AG04450 (cell line): ENCODE measurements at regions of chr21 and their contacts with region 1.

Region 1: GRCh38 chr21:31180256-31181081 is 142.2 kb upstream of the KRTAP19-8 start:
- DNase-seq: no peak
- H3K4me3 ChIP-seq: no peak overlapping the region
- H3K27ac ChIP-seq: no peak overlapping the region
- H3K27me3 ChIP-seq: no peaks in the 10 kb centered on the region
- CTCF ChIP-seq: peak; percentile 72

Region 2: DNA sequence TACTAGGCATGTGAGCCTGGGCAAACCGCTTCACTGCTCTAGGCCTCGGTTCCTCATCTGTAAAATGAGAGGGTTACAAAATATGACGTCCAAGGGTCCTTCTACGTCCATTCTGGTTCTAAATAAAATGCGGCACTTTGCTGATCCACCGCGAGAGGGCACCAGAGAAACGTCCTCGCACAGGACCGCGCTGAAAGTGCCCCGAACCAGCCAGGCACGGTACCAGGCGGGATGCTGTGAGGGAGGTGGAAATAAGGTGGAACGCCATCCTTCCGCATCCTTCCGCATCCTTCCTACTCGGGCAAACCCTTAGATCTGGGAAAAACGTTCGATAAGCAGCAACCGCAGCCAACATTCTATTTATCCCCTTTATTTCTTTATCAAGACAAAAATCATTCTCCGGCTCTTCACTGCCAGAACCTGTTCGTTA is 81.9 kb before region 1 on chr21:
- CTCF ChIA-PET with region 1: interaction called, 154 read pairs
- POLR2A ChIA-PET with region 1: no interaction called
- DNase-seq: peak; percentile 10
- H3K4me3 ChIP-seq: no peak overlapping the region
- H3K27ac ChIP-seq: no peak overlapping the region
- H3K27me3 ChIP-seq: no peaks in the 10 kb centered on the region
- CTCF ChIP-seq: peak; percentile 91

Region 3: DNA sequence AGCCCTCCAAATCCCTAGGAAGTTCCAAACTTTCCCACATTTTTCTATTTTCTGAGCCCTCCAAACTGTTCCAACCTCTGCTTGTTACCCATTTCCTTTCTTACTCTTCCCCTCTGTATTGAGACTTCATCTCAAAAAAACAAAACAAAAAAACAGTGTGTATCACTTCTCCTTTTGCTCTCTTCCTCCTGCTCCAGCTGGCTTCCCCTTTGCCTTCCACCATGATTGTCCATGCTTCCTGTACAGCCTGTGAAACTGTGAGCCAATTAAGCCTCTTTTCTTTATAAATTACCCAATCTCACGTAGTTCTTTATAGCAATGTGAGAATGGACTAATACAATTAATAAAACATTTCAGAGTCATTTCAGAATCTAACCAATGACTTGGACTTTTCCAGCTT is 72.6 kb before region 1 on chr21:
- CTCF ChIA-PET with region 1: interaction called, 154 read pairs
- POLR2A ChIA-PET with region 1: no interaction called
- DNase-seq: no peak
- H3K4me3 ChIP-seq: no peak overlapping the region
- H3K27ac ChIP-seq: no peak overlapping the region
- H3K27me3 ChIP-seq: no peaks in the 10 kb centered on the region
- CTCF ChIP-seq: no peak

Region 4: GRCh38 chr21:31137960-31138359 is 42.5 kb before region 1 on chr21:
- CTCF ChIA-PET with region 1: no interaction called
- POLR2A ChIA-PET with region 1: no interaction called
- DNase-seq: no peak
- H3K4me3 ChIP-seq: no peak overlapping the region
- H3K27ac ChIP-seq: no peak overlapping the region
- H3K27me3 ChIP-seq: no peaks in the 10 kb centered on the region
- CTCF ChIP-seq: no peak

Region 5: GRCh38 chr21:31164713-31165694 is 15.5 kb before region 1 on chr21:
- CTCF ChIA-PET with region 1: interaction called, 15 read pairs
- POLR2A ChIA-PET with region 1: no interaction called
- DNase-seq: no peak
- H3K4me3 ChIP-seq: no peak overlapping the region
- H3K27ac ChIP-seq: no peak overlapping the region
- H3K27me3 ChIP-seq: no peaks in the 10 kb centered on the region
- CTCF ChIP-seq: no peak

Region 6: DNA sequence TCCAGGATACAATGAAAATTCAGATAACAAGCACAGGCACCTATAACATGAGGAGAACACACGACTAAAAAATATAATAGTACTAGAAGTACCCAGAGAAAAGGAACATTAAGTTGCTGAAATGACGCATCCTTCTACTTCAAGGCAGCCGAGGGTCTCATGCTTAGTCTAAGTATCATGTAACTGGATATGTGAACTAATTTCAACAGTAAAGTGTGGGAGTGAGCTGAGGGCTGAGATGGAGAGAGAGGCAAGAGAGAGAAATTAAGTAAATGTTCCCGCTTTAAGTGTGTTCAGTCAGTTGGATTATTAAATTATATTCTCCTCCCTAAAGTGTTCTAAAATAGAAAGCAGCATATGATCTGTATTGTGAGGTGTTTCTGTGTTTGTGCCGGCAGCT is 10.0 kb after region 1 on chr21:
- CTCF ChIA-PET with region 1: interaction called, 17 read pairs
- POLR2A ChIA-PET with region 1: no interaction called
- DNase-seq: no peak
- H3K4me3 ChIP-seq: no peak overlapping the region
- H3K27ac ChIP-seq: no peak overlapping the region
- H3K27me3 ChIP-seq: no peaks in the 10 kb centered on the region
- CTCF ChIP-seq: no peak

Region 7: GRCh38 chr21:31198575-31198974 is 18.1 kb after region 1 on chr21:
- CTCF ChIA-PET with region 1: interaction called, 17 read pairs
- POLR2A ChIA-PET with region 1: no interaction called
- DNase-seq: peak; percentile 24
- H3K4me3 ChIP-seq: no peak overlapping the region
- H3K27ac ChIP-seq: no peak overlapping the region
- H3K27me3 ChIP-seq: no peaks in the 10 kb centered on the region
- CTCF ChIP-seq: peak; percentile 63